ENCODE measurements at regions of chr4 and their contacts with region 1.

Region 1: GRCh38 chr4:2943321-2944090 is 19.7 kb downstream of the NOP14 start:
- DNase-seq: no peak
- ATAC-seq: peak in 1 of 2 experiments; percentile 17; a peak in 3 of 6 replicates
- H3K4me3 ChIP-seq: no peak overlapping the region
- H3K27ac ChIP-seq: no peak overlapping the region
- H3K4me1 ChIP-seq: no peaks in the 10 kb centered on the region
- CTCF ChIP-seq: no peak
- EP300 ChIP-seq: no peak
- POLR2A ChIP-seq: no peak
- RAD21 ChIP-seq: no peak

Region 2: GRCh38 chr4:2954358-2955185 is 11.1 kb after region 1 on chr4:
- CTCF ChIA-PET with region 1: interaction called, 11 read pairs
- POLR2A ChIA-PET with region 1: no interaction called
- DNase-seq: peak in 1 of 2 experiments; percentile 50
- ATAC-seq: peak in 1 of 2 experiments; percentile 55; a peak in 3 of 6 replicates
- H3K4me3 ChIP-seq: no peak overlapping the region
- H3K27ac ChIP-seq: no peak overlapping the region
- H3K4me1 ChIP-seq: no peaks in the 10 kb centered on the region
- CTCF ChIP-seq: no peak; the same call in 2 of the 3 replicates
- EP300 ChIP-seq: no peak
- POLR2A ChIP-seq: no peak
- RAD21 ChIP-seq: no peak

Region 3: GRCh38 chr4:2995546-2996265 is 52.2 kb after region 1 on chr4:
- CTCF ChIA-PET with region 1: no interaction called
- POLR2A ChIA-PET with region 1: no interaction called
- DNase-seq: no peak
- ATAC-seq: no peak
- H3K4me3 ChIP-seq: no peak overlapping the region
- H3K27ac ChIP-seq: no peak overlapping the region
- H3K4me1 ChIP-seq: no peaks in the 10 kb centered on the region
- CTCF ChIP-seq: no peak
- EP300 ChIP-seq: no peak
- POLR2A ChIP-seq: no peak
- RAD21 ChIP-seq: no peak

Region 4: DNA sequence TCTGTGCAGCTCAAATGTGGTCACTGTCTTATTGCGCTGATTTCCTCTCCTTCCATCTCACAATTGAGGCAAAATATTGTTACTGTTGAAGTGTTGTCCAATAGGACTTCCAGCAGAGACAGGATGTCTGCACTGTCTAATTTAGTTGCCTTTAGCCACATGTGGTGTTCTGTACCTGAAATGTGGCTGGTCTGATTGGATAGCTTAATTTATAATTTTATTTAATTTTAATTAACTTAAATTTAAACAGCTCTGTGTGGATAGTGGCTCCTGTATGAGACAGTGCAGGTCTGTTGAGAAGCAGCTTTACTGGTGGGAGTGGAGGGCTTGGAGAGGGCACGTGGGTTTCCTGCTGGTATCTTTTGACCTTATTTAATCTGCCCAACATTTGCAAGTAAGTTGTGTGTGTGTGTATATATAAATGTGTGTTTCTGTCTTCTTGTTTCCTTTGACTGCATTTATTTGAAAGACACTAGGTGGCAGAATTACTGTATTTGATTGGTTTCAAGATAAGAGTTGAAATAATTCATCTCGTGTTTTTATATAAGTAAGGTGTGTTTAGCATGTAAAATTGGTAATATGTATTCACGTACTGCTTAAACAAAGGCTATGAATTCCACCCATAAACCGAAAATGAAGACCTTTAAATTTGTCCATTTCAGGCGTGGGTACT is 250.2 kb after region 1 on chr4:
- CTCF ChIA-PET with region 1: no interaction called
- POLR2A ChIA-PET with region 1: no interaction called
- DNase-seq: no peak
- ATAC-seq: no peak
- H3K4me3 ChIP-seq: no peak overlapping the region
- H3K27ac ChIP-seq: no peak overlapping the region
- H3K4me1 ChIP-seq: no peaks in the 10 kb centered on the region
- CTCF ChIP-seq: peak; percentile 44
- EP300 ChIP-seq: no peak
- POLR2A ChIP-seq: no peak
- RAD21 ChIP-seq: peak in 1 of 2 experiments; percentile 26; a peak in 3 of 5 replicates